Motor neuron (in vitro differentiated cells): ENCODE measurements at regions of chr1 and their contacts with region 1.

Region 1: DNA sequence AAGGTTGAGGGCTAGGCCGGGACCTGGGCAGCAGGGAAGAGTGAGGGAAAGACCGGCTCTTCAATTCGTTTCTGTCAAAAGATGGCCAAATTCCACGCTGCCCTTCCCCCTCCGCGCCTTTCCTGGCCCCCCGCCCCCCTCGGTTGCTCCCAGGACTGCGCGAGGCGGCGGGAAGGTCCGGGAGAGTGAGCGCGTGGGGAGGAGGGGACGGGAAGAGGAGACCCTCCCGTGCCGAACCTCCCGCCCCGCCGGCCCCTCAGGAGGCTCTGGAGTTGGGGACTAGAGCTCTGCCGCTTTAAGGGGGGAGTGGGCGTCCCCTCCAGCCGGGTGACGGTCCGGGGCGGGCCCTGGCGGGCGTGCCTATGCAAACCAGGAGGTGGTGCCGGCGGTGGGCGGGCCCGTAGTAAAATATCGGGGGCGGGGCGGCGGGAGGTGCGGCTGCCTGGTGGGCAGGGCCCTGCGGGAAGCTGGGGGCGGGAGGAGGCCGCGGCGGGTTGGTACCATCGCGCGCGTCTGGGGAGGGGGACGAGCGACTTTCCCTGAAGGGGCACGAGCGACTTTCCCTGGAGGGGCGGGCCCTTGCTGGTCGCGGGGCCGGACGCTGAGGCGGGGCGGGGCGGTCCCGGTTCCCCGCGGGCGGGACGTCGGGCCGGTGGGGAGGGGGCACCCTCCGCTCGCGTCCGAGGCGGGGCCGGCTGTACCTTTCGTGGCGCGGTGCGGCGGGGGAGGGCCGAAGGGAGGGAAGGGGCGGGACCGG is 58.2 kb downstream of the BCL9 start:
- ATAC-seq: peak; percentile 80 to 87 (median 84)
- H3K4me3 ChIP-seq: peak overlapping the region; percentile 66 to 94 (median 77)
- H3K27ac ChIP-seq: peak overlapping the region; percentile 86 to 91
- H3K4me1 ChIP-seq: peaks cover 9 to 18% of the 10 kb centered on the region in 2 donors

Region 2: DNA sequence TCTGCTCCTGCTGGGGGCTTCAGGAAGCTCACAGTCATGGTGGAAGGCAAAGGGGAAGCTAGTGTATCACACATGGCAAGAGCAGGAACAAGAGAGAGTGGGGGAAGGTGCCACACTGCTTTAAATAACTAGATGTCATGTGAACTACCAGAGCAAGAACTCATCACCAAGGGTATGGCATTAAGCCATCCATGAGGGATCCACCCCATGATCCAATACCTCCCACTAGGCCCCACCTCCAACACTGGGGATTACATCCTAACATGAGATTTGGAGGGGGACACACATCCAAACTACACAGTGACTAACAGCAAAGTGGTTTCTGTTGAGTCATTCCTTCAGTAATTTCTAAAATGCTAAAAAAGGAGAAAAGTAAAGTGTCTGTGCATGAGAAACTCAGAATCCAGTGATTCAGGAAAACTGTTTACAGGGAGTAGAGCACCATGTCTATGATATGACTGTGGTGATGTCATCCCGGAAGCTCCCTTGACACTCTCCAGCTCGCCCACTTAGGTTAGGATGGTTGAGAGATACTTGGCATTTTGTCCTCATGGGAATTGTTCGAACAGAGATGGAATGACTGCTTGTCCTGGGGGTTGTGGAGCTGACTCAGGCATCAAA is 306.8 kb before region 1 on chr1:
- in situ Hi-C with region 1: loop called in 1 of 9 experiments (anchors 25 kb)
- ATAC-seq: peak in 3 of 8 experiments; percentile 58 to 92 (median 90)
- H3K4me3 ChIP-seq: no peak overlapping the region
- H3K27ac ChIP-seq: no peak overlapping the region
- H3K4me1 ChIP-seq: no peaks in the 10 kb centered on the region

Region 3: DNA sequence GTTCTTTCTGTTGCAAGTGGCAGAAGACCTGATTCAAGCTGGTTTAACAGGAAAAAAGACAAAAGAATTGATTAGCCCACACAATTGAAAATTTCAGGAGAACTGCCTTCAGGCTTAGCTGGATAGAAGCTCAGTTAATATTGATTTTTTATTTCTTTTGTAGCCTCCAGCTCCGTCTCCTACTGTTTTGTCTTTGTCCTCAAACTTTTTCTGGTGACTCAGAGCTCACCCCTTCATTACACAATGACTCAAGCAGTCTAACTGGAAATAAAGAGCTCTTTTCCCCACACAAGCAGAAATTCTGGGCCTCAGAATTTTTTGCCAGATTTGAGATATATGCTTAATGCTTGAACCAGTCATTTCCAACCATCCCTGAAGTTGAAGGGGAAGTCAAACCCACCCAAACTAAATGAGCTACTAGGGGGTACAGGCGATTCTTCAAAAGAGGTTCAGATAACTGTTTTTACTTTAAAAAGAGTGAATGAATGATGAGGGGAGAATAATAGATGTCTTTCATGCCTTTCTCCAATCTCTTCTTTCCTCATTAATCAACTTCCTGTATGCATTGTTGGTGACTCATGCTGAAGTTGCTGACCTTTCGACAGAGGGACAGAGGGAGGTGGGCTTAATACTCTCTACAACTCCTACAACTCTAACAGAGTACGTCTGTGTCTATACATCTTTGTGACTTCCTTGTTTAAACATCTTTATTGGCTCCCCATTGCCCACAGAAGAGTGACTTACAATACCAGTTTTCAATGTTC is 76.9 kb after region 1 on chr1:
- in situ Hi-C with region 1: loop called in 1 of 9 experiments (anchors 25 kb)
- ATAC-seq: peak in 6 of 8 experiments; percentile 50 to 90 (median 84)
- H3K4me3 ChIP-seq: no peak overlapping the region
- H3K27ac ChIP-seq: no peak overlapping the region
- H3K4me1 ChIP-seq: peaks cover 4% of the 10 kb centered on the region in 2 donors